Activated CD4-positive, alpha-beta T cell treated with anti-CD3 and anti-CD28 coated beads for 36 hours (primary cell): ENCODE measurements at regions of chr4 and their contacts with region 1.

Region 1: DNA sequence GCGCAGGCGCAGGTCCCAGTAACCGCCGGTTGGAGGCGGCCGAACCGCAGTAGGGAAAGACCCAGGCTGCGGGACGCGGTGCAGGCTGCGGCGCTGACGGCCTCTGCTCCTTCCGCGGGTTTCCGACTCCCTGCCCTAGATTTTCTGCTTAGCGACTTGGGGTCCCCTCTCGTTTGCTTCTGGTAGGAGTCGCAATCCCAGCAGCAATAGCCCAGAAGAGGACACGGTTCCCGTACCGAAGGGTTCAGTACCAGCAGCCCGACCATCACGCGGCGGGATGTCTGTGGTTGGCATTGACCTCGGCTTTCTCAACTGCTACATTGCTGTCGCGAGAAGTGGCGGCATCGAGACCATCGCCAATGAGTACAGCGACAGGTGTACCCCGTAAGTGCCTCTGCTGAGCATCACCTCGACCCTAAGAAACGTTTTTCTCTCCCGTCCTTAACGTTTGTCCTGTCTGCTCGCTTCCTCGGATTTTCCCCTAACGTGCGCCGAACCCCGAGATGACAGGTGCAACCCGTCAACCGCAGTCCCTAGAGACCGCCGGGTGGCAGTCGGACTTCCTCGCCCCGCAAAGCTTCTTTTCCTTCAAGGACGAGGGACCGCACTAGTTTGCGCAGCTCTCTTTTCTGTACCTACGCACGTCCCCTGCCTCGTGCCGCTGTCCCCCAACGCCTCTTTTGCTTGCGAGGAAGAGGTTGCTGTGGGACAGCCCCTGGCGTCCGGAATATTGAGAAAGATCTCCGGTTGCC is at the start of gene HSPA4L:
- DNase-seq: peak; percentile 65
- ATAC-seq: peak; percentile 59
- H3K4me3 Mint-ChIP-seq: peak within 1 kb of the TSS; percentile 74
- H3K27ac Mint-ChIP-seq: peak within 1 kb of the TSS; percentile 86
- H3K4me1 Mint-ChIP-seq: peaks cover 14% of the 10 kb centered on the region
- H3K27me3 Mint-ChIP-seq: peaks cover 56% of the 10 kb centered on the region
- total RNA-seq, gene HSPA4L: 2.7 to 3.0 TPM

Region 2: DNA sequence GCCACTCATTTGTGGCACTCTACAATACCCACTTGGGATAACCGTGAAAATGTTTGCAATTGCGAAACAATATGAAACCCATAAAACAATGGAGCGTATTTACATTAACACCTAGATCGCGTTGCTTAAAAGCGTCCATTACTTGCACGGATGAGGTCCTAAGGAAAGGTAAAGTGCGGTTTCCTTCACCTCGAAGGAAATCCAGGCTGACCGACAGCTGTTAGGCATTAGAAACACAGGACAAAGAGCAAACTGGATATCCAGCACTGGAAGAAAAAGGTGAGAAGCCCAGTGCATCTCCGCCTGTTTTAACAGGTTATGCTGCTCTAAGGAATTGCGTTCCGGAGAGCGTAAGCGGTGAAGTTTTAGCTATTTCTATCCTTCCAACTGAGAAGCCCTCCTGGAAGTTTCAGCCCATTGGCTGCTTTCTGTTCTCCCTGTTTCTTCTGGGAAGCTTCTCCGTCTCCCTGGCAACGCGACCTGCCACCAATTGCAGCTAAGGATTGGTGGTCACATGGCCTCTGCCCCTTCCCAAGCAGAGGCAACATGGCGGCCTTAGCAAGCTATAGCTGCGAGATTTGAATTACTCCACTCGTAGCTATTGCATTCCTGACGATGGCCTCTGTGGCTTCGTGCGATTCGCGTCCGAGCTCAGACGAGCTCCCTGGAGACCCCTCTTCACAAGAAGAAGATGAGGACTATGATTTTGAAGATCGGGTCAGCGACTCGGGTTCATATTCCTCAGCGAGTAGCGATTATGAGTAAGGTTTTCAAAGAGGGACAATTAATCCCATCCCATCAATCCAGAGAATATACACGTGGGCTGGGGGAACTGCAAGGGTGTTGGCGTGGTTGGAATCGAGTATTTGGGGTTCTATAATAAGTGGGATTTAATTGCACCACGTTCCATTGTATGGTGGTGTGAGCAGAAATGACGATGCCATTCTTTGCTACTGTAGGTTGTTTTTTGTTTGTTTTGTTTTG is 149.7 kb before region 1 on chr4 and contains the start of gene INTU:
- CTCF ChIA-PET with region 1: no interaction called
- POLR2A ChIA-PET with region 1: no interaction called
- intact Hi-C with region 1: loop called in 1 of 2 experiments (anchors 2 kb)
- DNase-seq: peak; percentile 72
- ATAC-seq: peak; percentile 99
- H3K4me3 Mint-ChIP-seq: peak within 1 kb of the TSS; percentile 75
- H3K27ac Mint-ChIP-seq: peak within 1 kb of the TSS; percentile 27
- H3K4me1 Mint-ChIP-seq: peaks cover 9% of the 10 kb centered on the region
- H3K27me3 Mint-ChIP-seq: peaks cover 37% of the 10 kb centered on the region
- total RNA-seq, gene INTU: 0.50 to 0.56 TPM

Region 3: DNA sequence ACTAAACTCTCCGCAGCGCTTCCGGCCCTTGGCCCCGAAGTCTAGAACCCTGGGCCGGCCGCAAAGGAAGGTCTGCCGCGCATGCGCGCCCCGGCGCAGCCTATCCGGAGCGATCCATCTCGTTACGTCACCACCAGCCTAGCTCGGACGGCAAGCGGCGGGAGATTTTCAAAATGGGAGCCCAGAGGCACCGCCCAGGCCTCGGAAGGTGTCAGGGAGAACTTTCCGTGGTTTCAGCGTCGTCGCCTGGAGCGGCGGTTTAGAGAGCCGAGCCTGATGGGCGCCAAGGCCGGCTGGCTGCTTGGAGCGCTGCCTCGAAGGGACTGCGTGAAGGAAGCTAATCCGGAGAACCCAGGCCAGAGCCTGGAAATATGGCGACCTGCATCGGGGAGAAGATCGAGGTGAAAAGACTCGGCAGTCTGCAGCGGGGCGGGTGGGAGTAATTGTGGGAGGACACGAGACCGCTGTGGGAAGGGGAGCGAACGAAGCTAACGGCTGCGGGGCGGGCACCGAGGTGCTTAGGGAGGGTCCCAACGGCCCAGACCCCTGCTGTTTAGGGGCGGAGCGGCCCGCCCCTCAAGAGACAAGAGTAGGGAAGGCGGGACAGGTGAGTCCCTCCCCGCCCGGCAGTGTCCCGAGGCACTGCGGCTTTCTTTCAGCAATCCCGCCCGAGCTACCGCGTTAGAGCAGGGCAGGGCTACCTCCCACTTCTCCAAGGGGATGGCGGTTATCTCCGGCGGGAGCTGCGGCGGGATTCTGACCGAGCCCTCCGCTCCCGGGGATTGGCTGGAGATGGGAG is 98.5 kb after region 1 on chr4 and contains the start of gene PLK4:
- CTCF ChIA-PET with region 1: no interaction called
- POLR2A ChIA-PET with region 1: interaction called, 5 read pairs
- intact Hi-C with region 1: loop called (anchors 1 to 2 kb)
- DNase-seq: peak; percentile 97
- ATAC-seq: peak; percentile 97
- H3K4me3 Mint-ChIP-seq: peak within 1 kb of the TSS; percentile 97
- H3K27ac Mint-ChIP-seq: peak within 1 kb of the TSS; percentile 98
- H3K4me1 Mint-ChIP-seq: peaks cover 24% of the 10 kb centered on the region
- H3K27me3 Mint-ChIP-seq: no peaks in the 10 kb centered on the region
- total RNA-seq, gene PLK4: 44.4 to 52.3 TPM